Gastrocnemius medialis (tissue), 4 donors: ENCODE measurements at regions of chr9 and their contacts with region 1.

Region 1: GRCh38 chr9:106862825-106863720 is at the start of gene ZNF462:
- DNase-seq: peak; percentile 37 to 58
- ATAC-seq: peak; percentile 32 to 37
- H3K4me3 ChIP-seq: peak within 1 kb of the TSS; percentile 82 to 87 (median 84)
- H3K27ac ChIP-seq: peak within 1 kb of the TSS; percentile 88 to 92 (median 89)
- H3K4me1 ChIP-seq: peaks cover 17 to 35% of the 10 kb centered on the region in 2 donors
- H3K27me3 ChIP-seq: no peaks in the 10 kb centered on the region
- CTCF ChIP-seq: peak; percentile 8 to 99 (median 69)
- POLR2A ChIP-seq: no peak
- total RNA-seq, gene ZNF462: 9.3 to 13.3 (median 11.4) TPM

Region 2: GRCh38 chr9:105694190-105694847 is 1168.8 kb before region 1 on chr9 and contains the start of gene TMEM38B:
- in situ Hi-C with region 1: no loop called
- intact Hi-C with region 1: loop called (anchors 10 kb)
- DNase-seq: peak; percentile 78 to 87
- ATAC-seq: peak; percentile 64 to 65
- H3K4me3 ChIP-seq: peak within 1 kb of the TSS; percentile 73 to 91 (median 82)
- H3K27ac ChIP-seq: peak within 1 kb of the TSS; percentile 93 to 99 (median 96)
- H3K4me1 ChIP-seq: peaks cover 48 to 58% of the 10 kb centered on the region in 2 donors
- H3K27me3 ChIP-seq: no peaks in the 10 kb centered on the region
- CTCF ChIP-seq: no peak
- POLR2A ChIP-seq: peak; percentile 97 to 99
- total RNA-seq, gene TMEM38B: 81.4 to 97.6 (median 89.8) TPM

Region 3: GRCh38 chr9:105911104-105911911 is 951.8 kb before region 1 on chr9:
- in situ Hi-C with region 1: loop called in 1 of 4 experiments (anchors 25 kb)
- intact Hi-C with region 1: loop called (anchors 5 kb)
- DNase-seq: no peak
- ATAC-seq: no peak
- H3K4me3 ChIP-seq: peak overlapping the region in 1 of 4 donors; percentile 21
- H3K27ac ChIP-seq: peak overlapping the region; percentile 86 to 99 (median 90)
- H3K4me1 ChIP-seq: peaks cover 24 to 34% of the 10 kb centered on the region in 2 donors
- H3K27me3 ChIP-seq: no peaks in the 10 kb centered on the region
- CTCF ChIP-seq: no peak
- POLR2A ChIP-seq: no peak

Region 4: GRCh38 chr9:106675745-106676144 is 187.3 kb before region 1 on chr9:
- in situ Hi-C with region 1: no loop called
- intact Hi-C with region 1: loop called (anchors 1 kb)
- DNase-seq: peak; percentile 85 to 92
- ATAC-seq: peak; percentile 98
- H3K4me3 ChIP-seq: no peak overlapping the region
- H3K27ac ChIP-seq: peak overlapping the region; percentile 80 to 89 (median 84)
- H3K4me1 ChIP-seq: peaks cover 3 to 8% of the 10 kb centered on the region in 2 donors
- H3K27me3 ChIP-seq: no peaks in the 10 kb centered on the region
- CTCF ChIP-seq: no peak
- POLR2A ChIP-seq: no peak

Region 5: DNA sequence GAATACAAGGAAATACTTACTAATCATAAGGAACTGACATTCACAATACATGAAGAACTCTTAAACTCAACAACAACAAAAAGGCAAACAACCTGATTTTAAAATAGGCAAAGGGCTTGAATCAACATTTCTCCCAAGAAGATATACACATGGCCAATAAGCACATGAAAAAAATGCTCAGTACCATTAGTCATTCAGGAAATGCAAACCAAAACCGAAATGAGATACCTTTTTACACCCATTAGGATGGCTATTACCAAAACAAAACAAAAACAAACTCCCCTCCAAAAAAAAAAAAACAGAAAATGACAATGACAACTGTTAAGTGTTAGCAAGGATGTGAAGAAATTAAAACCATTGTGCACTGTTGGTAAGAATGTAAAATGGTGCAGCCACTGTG is 104.2 kb before region 1 on chr9:
- in situ Hi-C with region 1: no loop called
- intact Hi-C with region 1: loop called (anchors 5 kb)
- DNase-seq: no peak
- ATAC-seq: peak in 1 of 2 donors; percentile 46
- H3K4me3 ChIP-seq: no peak overlapping the region
- H3K27ac ChIP-seq: peak overlapping the region; percentile 39 to 90 (median 68)
- H3K4me1 ChIP-seq: peaks cover 27 to 39% of the 10 kb centered on the region in 2 donors
- H3K27me3 ChIP-seq: no peaks in the 10 kb centered on the region
- CTCF ChIP-seq: no peak
- POLR2A ChIP-seq: no peak

Region 6: GRCh38 chr9:106921341-106921899 is 58.3 kb after region 1 on chr9:
- in situ Hi-C with region 1: no loop called
- intact Hi-C with region 1: loop called (anchors 5 kb)
- DNase-seq: peak; percentile 27 to 43
- ATAC-seq: peak; percentile 54 to 70
- H3K4me3 ChIP-seq: peak overlapping the region; percentile 11 to 30 (median 24)
- H3K27ac ChIP-seq: peak overlapping the region; percentile 82 to 90 (median 88)
- H3K4me1 ChIP-seq: peaks cover 49 to 61% of the 10 kb centered on the region in 2 donors
- H3K27me3 ChIP-seq: no peaks in the 10 kb centered on the region
- CTCF ChIP-seq: no peak
- POLR2A ChIP-seq: no peak

Region 7: GRCh38 chr9:107172160-107172978 is 309.3 kb after region 1 on chr9:
- in situ Hi-C with region 1: no loop called
- intact Hi-C with region 1: loop called (anchors 10 kb)
- DNase-seq: peak; percentile 34 to 72
- ATAC-seq: peak; percentile 28 to 44
- H3K4me3 ChIP-seq: no peak overlapping the region
- H3K27ac ChIP-seq: peak overlapping the region; percentile 45 to 94 (median 74)
- H3K4me1 ChIP-seq: peaks cover 38 to 48% of the 10 kb centered on the region in 2 donors
- H3K27me3 ChIP-seq: no peaks in the 10 kb centered on the region
- CTCF ChIP-seq: peak; percentile 91 to 95 (median 92)
- POLR2A ChIP-seq: no peak